HepG2 (cell line): ENCODE measurements at regions of chr3 and their contacts with region 1.

Region 1: GRCh38 chr3:177824190-177824786 is 627.0 kb upstream of the TBL1XR1 start:
- DNase-seq: peak; percentile 93
- ATAC-seq: peak; percentile 90
- H3K4me3 ChIP-seq: peak overlapping the region in 2 of 3 experiments; percentile 1 to 8; a peak in 1 of 6 replicates
- H3K27ac ChIP-seq: peak overlapping the region; percentile 85
- H3K4me1 ChIP-seq: peaks cover 67% of the 10 kb centered on the region
- H3K27me3 ChIP-seq: no peaks in the 10 kb centered on the region
- CTCF ChIP-seq: no peak
- EP300 ChIP-seq: peak; percentile 80 to 97; a peak in 3 of 4 replicates
- POLR2A ChIP-seq: peak in 1 of 2 experiments; percentile 42; a peak in 1 of 4 replicates
- RAD21 ChIP-seq: 0 out of 2 replicates have a peak, but pooled peaks have one; percentile 18

Region 2: DNA sequence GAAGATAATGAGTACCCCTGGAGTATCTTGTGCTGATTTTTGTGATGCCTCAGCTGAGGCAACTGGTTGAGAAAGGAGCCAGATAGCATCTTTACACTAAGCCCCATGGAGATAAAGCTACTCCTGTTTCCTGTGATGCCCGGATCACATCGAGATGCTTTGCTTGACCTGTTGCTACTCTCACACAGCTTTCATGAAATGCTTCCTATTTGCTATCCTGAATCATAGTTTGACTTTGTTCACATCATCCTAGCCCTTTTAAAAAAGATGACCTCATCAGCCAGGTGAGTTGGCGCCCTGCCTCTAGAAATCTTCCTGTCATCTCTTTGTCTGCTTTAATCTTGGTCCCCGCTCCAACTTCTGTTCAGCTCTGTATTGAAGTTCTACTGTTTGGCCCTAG is 217.4 kb before region 1 on chr3:
- CTCF ChIA-PET with region 1: no interaction called
- POLR2A ChIA-PET with region 1: no interaction called
- in situ Hi-C with region 1: no loop called
- intact Hi-C with region 1: loop called (anchors 1 kb)
- DNase-seq: peak; percentile 52
- ATAC-seq: peak; percentile 52
- H3K4me3 ChIP-seq: no peak overlapping the region
- H3K27ac ChIP-seq: no peak overlapping the region
- H3K4me1 ChIP-seq: peaks cover 62% of the 10 kb centered on the region
- H3K27me3 ChIP-seq: no peaks in the 10 kb centered on the region; a peak in 1 of 5 replicates
- CTCF ChIP-seq: no peak
- EP300 ChIP-seq: peak in 1 of 2 experiments; percentile 18; a peak in 1 of 4 replicates
- POLR2A ChIP-seq: no peak
- RAD21 ChIP-seq: no peak

Region 3: DNA sequence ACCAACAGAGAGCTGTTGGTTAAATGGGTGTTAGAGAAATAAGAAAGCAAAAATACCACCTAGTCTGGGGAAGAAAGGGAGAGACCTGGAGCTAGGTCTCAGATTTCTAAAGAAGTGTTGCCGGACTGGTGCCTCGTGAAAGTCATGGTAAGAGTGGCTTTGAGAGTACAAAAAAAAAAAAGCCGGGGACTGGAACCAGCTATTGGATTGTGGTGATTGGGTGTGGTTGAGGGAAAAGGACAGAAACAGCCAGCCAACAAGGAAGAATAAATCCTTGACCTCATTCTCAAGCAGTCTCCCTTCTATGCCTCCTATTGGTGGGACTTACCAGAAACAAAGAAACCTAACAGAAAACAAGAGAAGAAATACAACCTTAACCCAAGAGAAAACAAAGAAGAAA is 365.6 kb after region 1 on chr3:
- CTCF ChIA-PET with region 1: no interaction called
- POLR2A ChIA-PET with region 1: no interaction called
- in situ Hi-C with region 1: no loop called
- intact Hi-C with region 1: no loop called
- DNase-seq: no peak
- ATAC-seq: no peak
- H3K4me3 ChIP-seq: no peak overlapping the region
- H3K27ac ChIP-seq: no peak overlapping the region
- H3K4me1 ChIP-seq: no peaks in the 10 kb centered on the region
- H3K27me3 ChIP-seq: no peaks in the 10 kb centered on the region
- CTCF ChIP-seq: no peak
- EP300 ChIP-seq: no peak
- POLR2A ChIP-seq: no peak
- RAD21 ChIP-seq: no peak